CD14-positive monocyte (primary cell): ENCODE measurements at regions of chrX and their contacts with region 1.

Region 1: DNA sequence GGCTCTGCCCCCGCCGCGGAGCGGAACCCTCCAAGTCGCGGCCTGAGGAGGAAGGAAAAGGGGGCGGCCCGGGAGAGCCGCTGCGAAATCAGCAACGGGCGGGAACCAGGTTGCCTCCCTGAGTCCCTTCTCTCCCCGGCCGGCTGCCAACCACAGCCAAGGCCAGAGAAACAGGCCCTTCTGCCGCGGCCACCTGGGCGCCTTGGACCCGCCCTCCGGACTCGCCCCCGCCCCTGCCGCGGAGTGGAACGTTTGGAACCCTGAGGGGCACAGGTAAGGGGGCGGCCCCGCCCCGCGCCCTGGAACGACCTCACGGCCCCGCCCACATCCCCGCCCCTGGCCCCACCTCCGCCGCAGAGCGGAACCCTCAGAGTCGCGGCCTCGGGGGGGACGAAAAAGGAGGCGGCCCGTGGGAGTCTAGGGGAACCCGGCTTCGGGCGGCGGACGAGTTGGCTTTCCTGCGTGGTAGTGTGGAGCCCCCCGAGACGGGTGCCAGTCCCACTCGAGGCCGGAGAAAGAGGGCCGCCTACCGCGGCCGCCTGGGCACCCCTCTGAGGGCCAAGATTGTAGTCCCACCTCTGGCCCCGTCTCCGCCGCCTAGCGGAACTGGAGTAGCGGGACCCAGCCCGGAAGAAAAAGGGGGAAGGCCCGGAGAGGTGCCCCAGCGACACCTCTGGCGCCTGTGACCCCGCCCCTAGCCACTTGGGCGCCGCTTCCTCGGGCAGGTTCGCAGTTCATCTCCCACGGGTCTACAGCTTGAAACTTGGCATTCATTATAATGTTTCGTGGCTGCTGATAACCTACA is 669 bp upstream of the PHKA2 start:
- DNase-seq: peak; percentile 65 to 74 (median 66)
- H3K4me3 ChIP-seq: peak overlapping the region; percentile 58 to 84 (median 78)
- H3K4me3 Mint-ChIP-seq: peak overlapping the region; percentile 81 to 90
- H3K27ac ChIP-seq: peak overlapping the region; percentile 86 to 92
- H3K27ac Mint-ChIP-seq: peak overlapping the region; percentile 87 to 94 (median 90)
- H3K4me1 ChIP-seq: peaks cover 18 to 23% of the 10 kb centered on the region in 2 donors
- H3K4me1 Mint-ChIP-seq: peaks cover 28% of the 10 kb centered on the region
- H3K27me3 ChIP-seq: peaks cover 0 to 5% of the 10 kb centered on the region in 2 donors
- H3K27me3 Mint-ChIP-seq: peaks cover 0 to 18% (median 3%) of the 10 kb centered on the region in 3 donors
- CTCF ChIP-seq: peak; percentile 51

Region 2: GRCh38 chrX:18931972-18932371 is 52.6 kb before region 1 on chrX:
- intact Hi-C with region 1: loop called in 1 of 2 experiments (anchors 10 kb)
- DNase-seq: peak in 2 of 3 donors; percentile 12 to 29
- H3K4me3 ChIP-seq: no peak overlapping the region
- H3K4me3 Mint-ChIP-seq: no peak overlapping the region
- H3K27ac ChIP-seq: no peak overlapping the region
- H3K27ac Mint-ChIP-seq: no peak overlapping the region
- H3K4me1 ChIP-seq: no peaks in the 10 kb centered on the region
- H3K4me1 Mint-ChIP-seq: no peaks in the 10 kb centered on the region
- H3K27me3 ChIP-seq: no peaks in the 10 kb centered on the region
- H3K27me3 Mint-ChIP-seq: peaks cover 0 to 2% (median 0%) of the 10 kb centered on the region in 3 donors
- CTCF ChIP-seq: peak; percentile 53